ENCODE measurements at regions of chr1 and their contacts with region 1.

Region 1: DNA sequence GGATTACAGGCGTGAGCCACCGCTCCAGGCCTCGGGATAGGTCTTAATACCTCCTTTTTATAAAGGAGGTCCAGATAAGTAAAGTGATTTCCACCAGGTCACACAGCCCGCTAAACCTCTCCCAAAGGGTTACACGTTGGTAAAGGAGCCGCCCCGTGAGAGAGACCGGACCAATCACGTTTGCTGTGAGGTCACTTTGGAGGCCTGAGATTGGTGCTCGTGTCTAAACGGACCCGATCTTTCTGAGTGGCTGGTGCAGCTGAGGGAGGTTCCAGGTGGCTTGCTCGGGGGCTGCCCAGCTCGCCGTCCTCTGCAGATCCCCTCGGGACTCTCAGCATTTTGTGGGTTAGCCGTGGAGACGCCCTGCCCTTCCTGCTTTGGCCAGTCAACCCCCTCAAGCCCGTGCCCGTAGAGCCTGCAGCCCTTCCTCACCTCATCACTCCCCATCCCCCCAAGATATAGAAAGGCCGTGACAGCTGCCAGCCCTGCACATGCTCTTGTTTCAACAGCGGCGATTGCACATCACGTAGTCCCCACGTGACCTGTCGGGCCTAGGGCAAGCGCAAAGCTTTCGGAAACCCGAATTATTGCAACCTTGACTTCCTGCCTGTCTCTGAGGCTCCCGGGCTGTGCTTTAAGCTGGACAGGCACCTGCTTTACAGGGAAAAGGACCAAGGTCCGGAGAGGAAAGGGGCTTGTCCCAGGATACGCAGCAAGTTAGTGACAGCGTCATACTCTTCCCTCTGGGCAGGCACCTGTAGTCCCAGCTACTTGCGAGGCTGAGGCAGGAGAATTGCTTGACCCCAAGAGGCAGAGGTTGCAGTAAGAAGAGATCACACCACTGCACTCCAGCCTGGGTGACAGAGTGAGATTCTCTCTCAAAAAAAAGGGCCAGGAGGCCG is 5.0 kb upstream of the COA7 start:
- DNase-seq: peak; percentile 89 to 94 (median 93)
- ATAC-seq: peak; percentile 94 to 95
- H3K4me3 ChIP-seq: peak overlapping the region; percentile 72
- H3K27ac ChIP-seq: peak overlapping the region; percentile 100
- H3K4me1 ChIP-seq: no peaks in the 10 kb centered on the region
- H3K27me3 ChIP-seq: no peaks in the 10 kb centered on the region

Region 2: GRCh38 chr1:52927212-52928014 is 224.3 kb after region 1 on chr1 and contains the start of gene SCP2:
- intact Hi-C with region 1: loop called in 1 of 4 experiments (anchors 10 kb)
- DNase-seq: peak; percentile 86 to 95 (median 94)
- ATAC-seq: peak; percentile 97 to 98
- H3K4me3 ChIP-seq: peak within 1 kb of the TSS; percentile 79
- H3K27ac ChIP-seq: peak within 1 kb of the TSS; percentile 92
- H3K4me1 ChIP-seq: no peaks in the 10 kb centered on the region
- H3K27me3 ChIP-seq: no peaks in the 10 kb centered on the region
- total RNA-seq, gene SCP2: 129 to 149 (median 135) TPM